Heart right ventricle (tissue), 16 donors: ENCODE measurements at regions of chr9 and their contacts with region 1.

Region 1: DNA sequence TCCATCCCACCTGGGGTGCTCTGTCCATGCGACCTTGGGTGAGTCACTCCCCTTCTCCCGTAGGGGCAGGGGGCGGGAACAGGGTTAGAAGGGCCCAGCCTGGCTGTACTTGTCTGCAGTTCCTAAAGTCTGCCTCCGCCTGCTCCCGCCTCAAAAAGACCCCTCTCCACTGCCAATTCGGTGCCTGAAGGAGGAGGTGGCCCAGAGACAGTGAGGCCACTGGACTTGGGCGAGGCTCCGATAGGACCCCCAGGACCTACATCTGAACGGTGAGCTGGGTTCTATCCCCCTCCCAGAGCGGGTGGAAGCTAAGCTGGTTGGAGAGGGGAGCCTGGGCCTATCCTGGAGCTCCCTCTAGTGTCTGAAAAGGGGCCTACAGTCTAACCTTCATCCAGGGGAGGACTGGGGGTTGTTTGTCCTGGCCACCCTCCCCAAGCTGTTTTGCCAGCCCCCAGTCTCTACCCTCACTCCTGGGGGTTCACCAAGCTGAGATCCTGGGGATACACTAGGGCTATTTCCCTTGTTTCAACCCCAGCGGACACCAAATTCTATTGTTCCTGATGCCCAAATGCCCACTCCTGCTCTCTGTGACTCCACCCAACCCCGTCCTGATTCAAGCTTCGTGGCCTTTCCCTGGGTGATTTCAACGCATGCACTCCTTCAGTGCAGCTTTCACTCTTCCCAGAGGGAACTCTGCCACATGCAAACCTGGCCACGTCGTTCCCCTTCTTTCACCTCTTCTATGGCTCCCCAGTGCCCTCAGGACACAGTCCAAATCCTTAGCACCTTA is 6.1 kb upstream of the CRB2 start:
- DNase-seq: peak in 1 of 2 donors; percentile 56
- ATAC-seq: peak; percentile 67 to 83 (median 76)
- H3K4me3 ChIP-seq: no peak overlapping the region
- H3K27ac ChIP-seq: no peak overlapping the region
- H3K4me1 ChIP-seq: peaks cover 0 to 10% (median 0%) of the 10 kb centered on the region in 9 donors
- H3K27me3 ChIP-seq: peaks cover 0 to 26% (median 17%) of the 10 kb centered on the region in 7 donors
- CTCF ChIP-seq: peak; percentile 88 to 98 (median 94)

Region 2: GRCh38 chr9:122464633-122465567 is 885.0 kb before region 1 on chr9:
- intact Hi-C with region 1: loop called in 1 of 10 experiments (anchors 10 kb)
- DNase-seq: peak; percentile 29 to 83
- ATAC-seq: peak; percentile 51 to 93 (median 80)
- H3K4me3 ChIP-seq: peak overlapping the region in 9 of 10 donors; percentile 20 to 51 (median 41)
- H3K27ac ChIP-seq: peak overlapping the region in 2 of 10 donors; percentile 5 to 73
- H3K4me1 ChIP-seq: peaks cover 0 to 12% (median 8%) of the 10 kb centered on the region in 9 donors
- H3K27me3 ChIP-seq: peaks cover 0 to 31% (median 6%) of the 10 kb centered on the region in 7 donors
- CTCF ChIP-seq: peak; percentile 73 to 87 (median 80)

Region 3: GRCh38 chr9:123081824-123082223 is 268.1 kb before region 1 on chr9:
- intact Hi-C with region 1: loop called (anchors 2 to 10 kb)
- DNase-seq: no peak
- ATAC-seq: peak in 1 of 8 donors; percentile 41
- H3K4me3 ChIP-seq: no peak overlapping the region
- H3K27ac ChIP-seq: no peak overlapping the region
- H3K4me1 ChIP-seq: peaks cover 0 to 3% (median 0%) of the 10 kb centered on the region in 9 donors
- H3K27me3 ChIP-seq: no peaks in the 10 kb centered on the region
- CTCF ChIP-seq: peak in 8 of 9 donors; percentile 11 to 63 (median 51)

Region 4: GRCh38 chr9:123102375-123103110 is 247.3 kb before region 1 on chr9:
- intact Hi-C with region 1: loop called in 4 of 10 experiments (anchors 5 to 10 kb)
- DNase-seq: no peak
- ATAC-seq: no peak
- H3K4me3 ChIP-seq: no peak overlapping the region
- H3K27ac ChIP-seq: no peak overlapping the region
- H3K4me1 ChIP-seq: peaks cover 0 to 8% (median 0%) of the 10 kb centered on the region in 9 donors
- H3K27me3 ChIP-seq: no peaks in the 10 kb centered on the region
- CTCF ChIP-seq: peak in 6 of 9 donors; percentile 22 to 42 (median 30)

Region 5: GRCh38 chr9:123268240-123268949 is 81.5 kb before region 1 on chr9 and contains the start of gene STRBP:
- intact Hi-C with region 1: loop called in 2 of 10 experiments (anchors 5 to 10 kb)
- DNase-seq: peak; percentile 88 to 92
- ATAC-seq: peak; percentile 95 to 98 (median 97)
- H3K4me3 ChIP-seq: peak within 1 kb of the TSS; percentile 57 to 94 (median 86)
- H3K27ac ChIP-seq: peak within 1 kb of the TSS in 9 of 10 donors; percentile 47 to 83 (median 78)
- H3K4me1 ChIP-seq: peaks cover 0 to 18% (median 10%) of the 10 kb centered on the region in 9 donors
- H3K27me3 ChIP-seq: no peaks in the 10 kb centered on the region
- CTCF ChIP-seq: peak in 3 of 9 donors; percentile 10 to 23 (median 19)
- total RNA-seq, gene STRBP: 10.5 to 22.2 (median 13.8) TPM

Region 6: DNA sequence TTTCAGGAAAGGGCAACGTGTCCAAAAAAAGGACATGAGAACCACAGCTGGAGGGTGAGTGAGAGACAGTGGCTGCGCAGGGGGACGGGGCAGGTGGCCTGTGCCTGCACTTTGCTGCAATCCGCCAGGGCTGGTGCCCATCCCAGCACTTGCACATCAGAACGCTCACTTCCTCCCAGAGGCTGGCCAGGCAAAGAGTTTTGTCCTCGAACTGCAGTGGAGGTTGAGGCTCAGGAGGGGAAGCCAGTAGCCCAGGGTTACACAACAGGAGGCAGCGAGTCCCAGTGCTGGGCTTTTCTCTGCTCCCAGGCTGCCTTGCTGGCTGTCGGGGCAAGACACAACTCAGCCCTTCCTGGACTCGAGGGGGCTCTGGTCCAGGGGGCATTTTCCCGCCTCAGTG is 39.2 kb after region 1 on chr9:
- intact Hi-C with region 1: loop called in 2 of 10 experiments (anchors 1 to 2 kb)
- DNase-seq: no peak
- ATAC-seq: no peak
- H3K4me3 ChIP-seq: no peak overlapping the region
- H3K27ac ChIP-seq: no peak overlapping the region
- H3K4me1 ChIP-seq: no peaks in the 10 kb centered on the region
- H3K27me3 ChIP-seq: no peaks in the 10 kb centered on the region
- CTCF ChIP-seq: no peak

Region 7: GRCh38 chr9:123678038-123678877 is 328.4 kb after region 1 on chr9:
- intact Hi-C with region 1: no loop called
- DNase-seq: no peak
- ATAC-seq: peak in 3 of 8 donors; percentile 36 to 60 (median 37)
- H3K4me3 ChIP-seq: no peak overlapping the region
- H3K27ac ChIP-seq: no peak overlapping the region
- H3K4me1 ChIP-seq: peaks cover 0 to 22% (median 11%) of the 10 kb centered on the region in 9 donors
- H3K27me3 ChIP-seq: no peaks in the 10 kb centered on the region
- CTCF ChIP-seq: no peak